Activated CD4-positive, alpha-beta memory T cell treated with anti-CD3 and anti-CD28 coated beads for 36 hours (primary cell): ENCODE measurements at regions of chr16 and their contacts with region 1.

Region 1: DNA sequence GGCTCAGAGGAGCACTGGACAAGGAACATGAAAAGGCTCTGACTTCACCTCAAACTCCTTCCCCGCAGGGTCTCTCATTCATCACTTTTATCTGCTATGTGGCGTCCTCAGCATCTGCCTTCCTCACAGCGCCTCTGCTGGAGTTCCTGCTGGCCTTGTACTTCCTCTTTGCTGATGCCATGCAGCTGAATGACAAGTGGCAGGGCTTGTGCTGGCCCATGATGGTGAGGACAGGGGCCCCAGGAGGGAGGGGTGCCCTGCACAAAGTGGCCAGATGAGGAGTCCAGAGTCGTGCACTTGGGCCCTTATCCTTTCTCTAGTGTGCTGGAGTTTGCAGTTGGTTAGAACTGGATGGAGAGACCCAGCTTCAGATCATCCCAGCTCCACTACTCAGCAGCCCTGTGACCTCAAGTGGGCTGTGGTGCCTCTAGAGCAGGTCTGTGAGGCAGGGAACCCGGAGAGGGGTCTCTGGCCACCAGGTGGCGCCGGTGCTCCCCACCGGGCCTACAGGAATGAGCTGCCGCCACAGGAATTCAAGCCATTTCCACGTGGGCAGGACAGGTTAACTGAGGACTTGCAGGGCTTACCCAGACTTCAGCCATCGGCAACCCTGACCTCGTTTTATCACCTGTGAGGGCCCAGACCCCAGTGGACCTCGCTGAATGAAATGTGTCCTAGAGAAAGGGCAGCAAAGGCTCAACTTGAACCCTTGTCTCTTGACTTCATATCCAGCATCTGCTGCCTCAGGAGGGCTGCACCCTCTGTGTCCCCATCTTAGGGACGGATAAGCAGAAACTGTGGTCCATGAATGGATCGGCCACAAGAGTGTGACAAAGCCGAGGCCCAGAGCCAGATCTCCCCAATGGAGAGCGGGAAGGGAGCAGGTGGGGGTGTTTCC is 4.0 kb downstream of the CMTM3 start:
- DNase-seq: peak; percentile 89
- H3K4me3 Mint-ChIP-seq: no peak overlapping the region
- H3K27ac Mint-ChIP-seq: peak overlapping the region; percentile 62
- H3K4me1 Mint-ChIP-seq: peaks cover 34% of the 10 kb centered on the region
- H3K27me3 Mint-ChIP-seq: no peaks in the 10 kb centered on the region

Region 2: GRCh38 chr16:66521951-66522771 is 86.3 kb before region 1 on chr16:
- CTCF ChIA-PET with region 1: interaction called, 13 read pairs
- POLR2A ChIA-PET with region 1: interaction called, 3 read pairs
- intact Hi-C with region 1: loop called (anchors 2 kb)
- DNase-seq: peak; percentile 99
- H3K4me3 Mint-ChIP-seq: peak overlapping the region; percentile 68
- H3K27ac Mint-ChIP-seq: peak overlapping the region; percentile 96
- H3K4me1 Mint-ChIP-seq: peaks cover 89% of the 10 kb centered on the region
- H3K27me3 Mint-ChIP-seq: no peaks in the 10 kb centered on the region

Region 3: DNA sequence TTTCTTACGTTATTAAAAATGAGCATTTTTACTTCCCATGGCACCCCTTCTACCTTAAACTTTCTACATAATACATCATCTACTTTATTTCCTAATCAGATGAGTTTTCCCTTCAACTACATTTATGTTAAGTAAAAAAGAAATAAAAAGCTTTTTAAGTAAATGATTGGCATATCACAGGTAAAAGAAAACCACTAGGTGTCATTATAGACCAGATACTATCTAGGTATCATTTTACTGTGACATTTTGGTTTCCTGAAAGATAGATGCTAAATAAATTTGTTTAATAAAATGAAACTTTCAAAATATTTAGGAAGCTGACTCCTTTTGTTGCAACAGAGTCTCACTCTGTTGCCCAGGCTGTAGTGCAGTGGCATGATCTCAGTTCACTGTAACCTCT is 46.1 kb before region 1 on chr16:
- CTCF ChIA-PET with region 1: interaction called, 37 read pairs
- POLR2A ChIA-PET with region 1: interaction called, 15 read pairs
- intact Hi-C with region 1: loop called (anchors 1 kb)
- DNase-seq: no peak
- H3K4me3 Mint-ChIP-seq: no peak overlapping the region
- H3K27ac Mint-ChIP-seq: no peak overlapping the region
- H3K4me1 Mint-ChIP-seq: peaks cover 71% of the 10 kb centered on the region
- H3K27me3 Mint-ChIP-seq: no peaks in the 10 kb centered on the region

Region 4: DNA sequence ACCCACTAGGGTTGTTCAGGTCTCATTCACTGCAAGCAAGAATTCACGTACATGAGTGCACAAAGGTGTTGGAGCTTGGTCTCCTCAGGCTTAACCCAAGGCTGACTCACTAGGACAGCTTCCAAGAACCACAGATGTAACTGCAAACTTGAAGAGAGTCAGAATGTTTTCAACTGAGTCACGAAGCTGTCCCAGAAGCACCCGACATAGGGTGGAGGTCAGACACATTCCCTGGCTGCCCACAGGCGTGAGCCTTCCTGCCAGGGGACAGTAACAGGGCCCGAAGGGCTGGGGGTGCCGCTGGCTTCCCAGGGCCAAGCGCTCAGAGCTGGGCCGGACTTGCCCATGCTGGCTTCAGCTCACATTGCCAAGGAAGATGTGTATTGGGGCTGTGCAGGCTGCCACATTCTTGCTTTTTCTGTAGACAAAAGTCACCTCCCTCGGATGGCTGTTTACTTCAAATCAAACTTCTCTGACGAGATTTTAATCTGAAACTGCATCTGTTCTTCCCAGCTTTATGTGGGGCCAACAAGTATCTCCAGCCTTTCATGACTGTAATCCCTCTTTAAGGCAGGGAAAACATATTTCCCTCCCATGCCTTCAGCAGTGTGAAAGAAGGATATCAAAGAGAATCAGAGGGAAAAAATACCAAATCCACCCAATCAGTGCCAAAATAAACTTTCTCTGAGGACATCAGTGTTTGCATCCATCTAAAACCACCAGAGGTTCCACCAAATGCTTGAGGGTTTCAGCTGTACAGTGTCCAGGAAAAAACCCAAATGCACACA is 10.3 kb after region 1 on chr16:
- CTCF ChIA-PET with region 1: interaction called, 15 read pairs
- POLR2A ChIA-PET with region 1: no interaction called
- intact Hi-C with region 1: no loop called
- DNase-seq: no peak
- H3K4me3 Mint-ChIP-seq: no peak overlapping the region
- H3K27ac Mint-ChIP-seq: no peak overlapping the region
- H3K4me1 Mint-ChIP-seq: peaks cover 2% of the 10 kb centered on the region
- H3K27me3 Mint-ChIP-seq: no peaks in the 10 kb centered on the region

Region 5: DNA sequence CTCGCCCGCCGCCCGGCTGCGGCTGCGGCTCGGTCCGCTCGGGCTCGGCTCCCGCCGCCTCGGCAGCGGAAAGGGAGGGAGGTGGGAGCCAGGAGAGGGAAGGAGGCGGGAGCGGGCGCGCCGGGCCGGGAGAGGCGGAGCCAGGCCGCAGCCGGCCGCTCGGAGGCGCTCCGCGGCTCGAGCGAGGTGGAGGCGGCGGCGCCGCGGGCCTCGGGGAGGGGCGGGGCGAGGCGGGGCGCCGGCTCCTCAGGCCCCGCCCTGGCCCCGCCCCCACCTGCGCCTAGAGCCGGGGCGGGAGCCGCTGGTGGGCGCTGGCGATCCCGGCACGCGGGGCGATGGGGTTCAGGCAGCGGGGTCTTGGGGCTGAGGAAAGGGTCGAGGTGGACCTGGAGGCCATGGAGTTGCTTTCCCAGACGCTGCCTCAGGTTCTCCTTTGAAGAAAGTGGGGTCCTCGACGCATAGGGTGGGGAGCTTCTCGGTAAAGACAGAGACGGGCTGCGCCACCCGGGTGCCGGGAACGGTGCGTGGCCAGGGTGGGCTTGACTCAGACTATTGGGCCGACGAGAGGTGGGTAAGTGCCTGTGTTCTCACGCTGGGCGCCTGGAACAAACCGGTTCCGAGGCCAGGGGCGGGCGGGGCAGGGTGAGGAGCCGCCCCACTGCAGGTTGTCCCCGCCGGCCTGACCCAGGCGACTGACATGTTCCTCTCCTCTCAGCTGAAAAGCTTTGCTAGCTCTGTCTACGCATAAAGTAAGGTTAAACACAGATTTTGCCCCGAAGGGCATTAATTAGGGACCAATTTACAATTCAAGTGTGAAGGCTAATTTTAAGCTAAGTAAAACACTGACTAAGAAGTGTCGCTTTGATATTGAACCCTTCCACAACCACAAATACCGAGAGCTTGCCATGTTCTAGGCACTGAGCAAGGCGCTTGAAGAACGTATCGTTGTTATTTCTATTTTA is 88.5 kb after region 1 on chr16 and contains the start of gene CMTM4:
- CTCF ChIA-PET with region 1: interaction called, 5 read pairs
- POLR2A ChIA-PET with region 1: interaction called, 3 read pairs
- intact Hi-C with region 1: loop called (anchors 5 kb)
- DNase-seq: peak; percentile 79
- H3K4me3 Mint-ChIP-seq: peak within 1 kb of the TSS; percentile 74
- H3K27ac Mint-ChIP-seq: no peak within 1 kb of the TSS
- H3K4me1 Mint-ChIP-seq: no peaks in the 10 kb centered on the region
- H3K27me3 Mint-ChIP-seq: peaks cover 4% of the 10 kb centered on the region
- total RNA-seq, gene CMTM4: 2.8 to 4.1 TPM